Posterior vena cava (tissue), 2 donors: ENCODE measurements at regions of chr14 and their contacts with region 1.

Region 1: DNA sequence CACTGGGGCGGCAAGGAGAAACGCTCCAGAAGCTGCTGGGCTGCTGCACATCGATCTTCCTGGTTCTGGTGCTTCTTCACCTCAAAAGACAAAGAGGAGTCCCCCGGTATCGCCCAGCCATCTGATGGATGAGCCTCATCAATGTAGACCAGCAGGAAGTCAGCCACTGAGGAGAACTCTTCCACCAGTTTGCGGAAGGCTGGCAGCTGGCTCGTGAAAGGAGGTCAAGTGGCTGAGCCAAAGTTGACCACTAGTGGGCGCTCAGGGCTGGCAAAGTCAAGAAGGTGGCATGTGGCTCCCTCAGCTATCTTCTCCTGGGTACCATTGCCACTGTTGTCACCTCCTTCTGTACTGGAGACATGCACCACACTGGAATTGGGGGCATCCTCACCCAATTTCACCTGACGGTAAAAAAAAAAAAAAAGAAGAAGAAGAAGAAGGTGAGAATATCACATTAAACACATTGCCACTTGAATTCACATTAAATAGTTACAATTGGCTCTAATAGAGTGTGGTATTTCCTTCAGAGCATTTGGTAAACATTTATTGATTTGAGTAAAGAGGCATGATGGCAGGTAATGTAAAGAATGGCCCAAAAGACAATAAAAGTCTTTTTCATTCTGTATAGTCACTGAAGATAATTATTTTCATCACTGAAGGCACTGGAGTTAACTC is 8.3 kb downstream of the DIO2 start:
- DNase-seq: no peak

Region 2: DNA sequence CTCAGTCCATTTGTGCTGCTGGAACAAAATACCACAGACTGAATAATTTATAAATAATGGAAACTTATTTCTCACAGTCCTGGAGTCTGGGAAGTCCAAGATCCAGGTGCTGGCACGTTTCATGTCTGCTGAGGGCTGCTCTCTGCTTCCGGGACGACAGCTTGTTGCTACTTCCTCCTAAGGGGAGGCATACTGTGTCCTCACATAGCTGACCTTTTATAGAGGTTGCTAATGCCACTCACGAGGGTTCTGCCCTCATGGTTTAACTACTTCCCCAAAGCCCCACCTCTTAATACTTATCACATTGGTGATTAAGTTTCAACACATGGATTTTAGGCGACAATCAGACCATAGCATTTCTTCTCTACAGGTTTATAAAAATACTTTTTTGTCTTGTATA is 1621.8 kb before region 1 on chr14:
- intact Hi-C with region 1: no loop called
- DNase-seq: no peak

Region 3: GRCh38 chr14:79680087-79680820 is 522.8 kb before region 1 on chr14:
- intact Hi-C with region 1: loop called in 1 of 2 experiments (anchors 5 kb)
- DNase-seq: no peak

Region 4: GRCh38 chr14:80223696-80224460 is 20.9 kb after region 1 on chr14:
- intact Hi-C with region 1: loop called in 1 of 2 experiments (anchors 1 kb)
- DNase-seq: no peak